B cell (primary cell): ENCODE measurements at regions of chr7 and their contacts with region 1.

Region 1: GRCh38 chr7:139725077-139725476 is 52.7 kb downstream of the HIPK2 start:
- DNase-seq: peak; percentile 56
- ATAC-seq: peak; percentile 65
- H3K4me3 ChIP-seq: no peak overlapping the region
- H3K4me3 Mint-ChIP-seq: peak overlapping the region; percentile 63
- H3K27ac ChIP-seq: peak overlapping the region; percentile 86 to 89
- H3K27ac Mint-ChIP-seq: peak overlapping the region; percentile 92
- H3K4me1 ChIP-seq: peaks cover 26 to 38% of the 10 kb centered on the region in 2 donors
- H3K4me1 Mint-ChIP-seq: peaks cover 37% of the 10 kb centered on the region
- H3K27me3 ChIP-seq: no peaks in the 10 kb centered on the region
- H3K27me3 Mint-ChIP-seq: no peaks in the 10 kb centered on the region
- CTCF ChIP-seq: no peak

Region 2: GRCh38 chr7:139708541-139708940 is 16.5 kb before region 1 on chr7:
- CTCF ChIA-PET with region 1: interaction called, 3 read pairs
- POLR2A ChIA-PET with region 1: interaction called, 4 read pairs
- intact Hi-C with region 1: loop called (anchors 2 kb)
- DNase-seq: peak; percentile 72
- ATAC-seq: peak; percentile 91
- H3K4me3 ChIP-seq: no peak overlapping the region
- H3K4me3 Mint-ChIP-seq: peak overlapping the region; percentile 50
- H3K27ac ChIP-seq: peak overlapping the region; percentile 48 to 72
- H3K27ac Mint-ChIP-seq: peak overlapping the region; percentile 62
- H3K4me1 ChIP-seq: peaks cover 18 to 31% of the 10 kb centered on the region in 2 donors
- H3K4me1 Mint-ChIP-seq: peaks cover 45% of the 10 kb centered on the region
- H3K27me3 ChIP-seq: no peaks in the 10 kb centered on the region
- H3K27me3 Mint-ChIP-seq: no peaks in the 10 kb centered on the region
- CTCF ChIP-seq: no peak